ENCODE measurements at regions of chr20 and their contacts with region 1.

Region 1: DNA sequence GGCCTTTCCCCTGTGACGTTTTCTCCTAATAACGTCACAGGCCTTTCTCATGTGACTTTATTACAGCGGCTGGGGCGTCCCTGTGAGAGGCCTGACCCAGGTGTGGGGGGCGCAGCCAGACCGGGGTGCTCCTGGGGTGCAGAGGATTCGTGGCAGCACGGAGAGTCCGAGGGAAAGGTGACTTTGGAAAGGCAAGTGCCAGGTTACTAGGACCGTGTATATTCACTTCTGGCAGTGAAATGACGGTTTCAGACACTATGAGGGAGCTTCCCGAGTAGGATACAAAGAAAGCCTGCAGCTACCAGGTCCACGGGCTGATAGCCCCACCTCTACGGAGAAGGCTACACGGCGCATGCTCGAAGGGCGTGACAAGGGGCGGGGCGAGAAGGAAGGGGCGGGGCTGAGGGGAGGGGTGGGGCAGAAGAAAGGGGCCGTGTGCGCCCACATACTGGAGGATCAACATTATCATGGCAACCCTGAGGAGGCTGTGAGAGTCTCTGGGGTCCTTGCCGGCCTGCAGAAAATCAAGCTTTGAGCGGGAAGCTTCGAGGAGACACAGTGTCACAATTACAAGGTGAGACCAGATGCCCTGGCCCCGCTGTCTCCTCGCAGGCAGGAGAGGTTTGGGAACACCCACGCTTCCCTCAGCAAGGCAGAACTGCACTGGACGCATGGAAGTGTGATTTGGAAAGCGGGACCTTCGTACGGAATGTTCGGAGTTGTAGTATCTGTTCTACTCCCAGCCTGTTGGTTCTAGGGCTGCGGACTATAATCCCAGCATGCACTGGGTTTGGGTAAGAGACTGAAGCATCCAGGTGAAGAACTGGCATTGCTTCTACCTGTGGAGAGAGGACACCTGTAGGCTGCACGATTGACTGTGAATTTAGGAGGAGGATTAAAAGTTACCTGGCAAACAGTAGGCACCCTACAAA is 54.4 kb upstream of the ZNF337 start:
- DNase-seq: peak; percentile 45 to 80 (median 56)
- ATAC-seq: peak; percentile 97
- H3K4me3 ChIP-seq: peak overlapping the region; percentile 56
- H3K4me3 Mint-ChIP-seq: peak overlapping the region; percentile 93
- H3K27ac ChIP-seq: no peak overlapping the region
- H3K27ac Mint-ChIP-seq: peak overlapping the region; percentile 82
- H3K4me1 ChIP-seq: peaks cover 17% of the 10 kb centered on the region
- H3K4me1 Mint-ChIP-seq: peaks cover 15% of the 10 kb centered on the region
- H3K27me3 ChIP-seq: no peaks in the 10 kb centered on the region
- H3K27me3 Mint-ChIP-seq: no peaks in the 10 kb centered on the region
- CTCF ChIP-seq: no peak

Region 2: GRCh38 chr20:25584905-25585704 is 165.9 kb before region 1 on chr20 and contains the start of gene NINL:
- CTCF ChIA-PET with region 1: no interaction called
- POLR2A ChIA-PET with region 1: no interaction called
- intact Hi-C with region 1: loop called in 1 of 2 experiments (anchors 5 kb)
- DNase-seq: peak; percentile 4 to 69 (median 38)
- ATAC-seq: peak; percentile 89
- H3K4me3 ChIP-seq: peak within 1 kb of the TSS; percentile 34
- H3K4me3 Mint-ChIP-seq: peak within 1 kb of the TSS; percentile 84
- H3K27ac ChIP-seq: no peak within 1 kb of the TSS
- H3K27ac Mint-ChIP-seq: peak within 1 kb of the TSS; percentile 53
- H3K4me1 ChIP-seq: peaks cover 7% of the 10 kb centered on the region
- H3K4me1 Mint-ChIP-seq: peaks cover 10% of the 10 kb centered on the region
- H3K27me3 ChIP-seq: no peaks in the 10 kb centered on the region
- H3K27me3 Mint-ChIP-seq: peaks cover 8% of the 10 kb centered on the region
- CTCF ChIP-seq: no peak
- total RNA-seq, gene NINL: 2.7 to 4.0 TPM

Measured in CD4-positive, alpha-beta T cell (primary cell).